ENCODE measurements at regions of chr20 and their contacts with region 1.

Region 1: DNA sequence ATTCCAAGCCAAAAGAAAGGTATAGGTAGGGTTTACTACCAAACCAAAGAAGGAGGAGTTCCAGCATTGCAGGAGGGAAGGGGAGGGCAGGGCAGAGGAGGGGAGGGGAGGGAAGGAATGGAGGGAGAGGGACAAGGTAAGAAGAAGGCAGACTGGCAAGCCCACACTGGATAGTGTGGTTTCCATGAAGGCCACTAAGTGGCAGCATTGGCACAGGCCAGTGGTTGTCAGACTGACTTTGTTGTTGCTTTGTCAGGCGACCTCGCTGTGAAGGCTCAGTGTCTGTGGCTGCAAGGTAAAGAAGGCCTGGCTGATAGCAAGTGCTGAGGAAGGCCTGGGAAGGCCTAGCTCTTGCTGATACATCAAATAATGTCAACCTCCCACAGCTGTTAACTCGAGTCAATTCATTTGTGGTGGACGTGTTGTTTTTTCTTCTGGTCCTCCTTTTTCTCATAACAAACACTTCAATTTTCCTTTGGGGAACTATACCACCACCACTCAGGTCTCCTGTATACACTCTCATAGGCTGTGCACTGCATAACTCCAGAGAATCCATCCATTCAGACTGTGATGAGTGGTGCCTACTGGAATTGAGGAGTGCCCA is 7.7 kb upstream of the ZNF334 start:
- DNase-seq: peak; percentile 47
- H3K4me3 ChIP-seq: no peak overlapping the region
- H3K27ac ChIP-seq: no peak overlapping the region
- H3K4me1 ChIP-seq: no peaks in the 10 kb centered on the region
- H3K27me3 ChIP-seq: no peaks in the 10 kb centered on the region
- CTCF ChIP-seq: peak; percentile 37 to 77
- POLR2A ChIP-seq: no peak

Region 2: DNA sequence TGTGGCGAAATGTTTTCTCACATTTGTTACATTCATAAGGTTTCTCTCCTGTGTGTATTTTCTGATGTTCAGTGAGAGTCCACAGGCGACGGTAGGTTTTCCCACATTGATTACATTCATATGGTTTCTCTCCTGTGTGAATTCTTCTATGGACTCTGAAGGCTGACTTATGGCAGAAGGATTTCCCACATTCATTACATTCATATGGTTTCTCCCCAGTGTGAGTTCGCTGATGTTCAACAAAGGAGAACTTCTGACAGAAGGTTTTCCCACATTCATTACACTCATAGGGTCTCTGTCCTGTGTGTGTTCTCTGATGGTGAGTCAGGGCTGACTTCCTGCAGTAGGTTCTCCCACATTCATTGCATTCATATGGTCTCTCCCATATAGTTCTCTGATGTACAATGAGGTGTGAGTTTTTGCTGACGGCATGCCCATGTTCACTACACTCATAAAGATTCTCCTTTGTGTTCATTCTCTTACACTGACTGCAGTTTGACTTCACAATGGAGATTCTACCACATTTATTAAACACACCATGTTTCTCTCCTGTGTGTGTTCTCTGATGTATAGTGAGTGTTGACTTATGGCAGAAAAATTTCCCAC is 19.6 kb before region 1 on chr20:
- CTCF ChIA-PET with region 1: no interaction called
- POLR2A ChIA-PET with region 1: no interaction called
- dilution Hi-C with region 1: no loop called
- intact Hi-C with region 1: no loop called
- DNase-seq: no peak
- H3K4me3 ChIP-seq: no peak overlapping the region
- H3K27ac ChIP-seq: no peak overlapping the region
- H3K4me1 ChIP-seq: no peaks in the 10 kb centered on the region
- H3K27me3 ChIP-seq: no peaks in the 10 kb centered on the region
- CTCF ChIP-seq: no peak
- POLR2A ChIP-seq: no peak

Region 3: DNA sequence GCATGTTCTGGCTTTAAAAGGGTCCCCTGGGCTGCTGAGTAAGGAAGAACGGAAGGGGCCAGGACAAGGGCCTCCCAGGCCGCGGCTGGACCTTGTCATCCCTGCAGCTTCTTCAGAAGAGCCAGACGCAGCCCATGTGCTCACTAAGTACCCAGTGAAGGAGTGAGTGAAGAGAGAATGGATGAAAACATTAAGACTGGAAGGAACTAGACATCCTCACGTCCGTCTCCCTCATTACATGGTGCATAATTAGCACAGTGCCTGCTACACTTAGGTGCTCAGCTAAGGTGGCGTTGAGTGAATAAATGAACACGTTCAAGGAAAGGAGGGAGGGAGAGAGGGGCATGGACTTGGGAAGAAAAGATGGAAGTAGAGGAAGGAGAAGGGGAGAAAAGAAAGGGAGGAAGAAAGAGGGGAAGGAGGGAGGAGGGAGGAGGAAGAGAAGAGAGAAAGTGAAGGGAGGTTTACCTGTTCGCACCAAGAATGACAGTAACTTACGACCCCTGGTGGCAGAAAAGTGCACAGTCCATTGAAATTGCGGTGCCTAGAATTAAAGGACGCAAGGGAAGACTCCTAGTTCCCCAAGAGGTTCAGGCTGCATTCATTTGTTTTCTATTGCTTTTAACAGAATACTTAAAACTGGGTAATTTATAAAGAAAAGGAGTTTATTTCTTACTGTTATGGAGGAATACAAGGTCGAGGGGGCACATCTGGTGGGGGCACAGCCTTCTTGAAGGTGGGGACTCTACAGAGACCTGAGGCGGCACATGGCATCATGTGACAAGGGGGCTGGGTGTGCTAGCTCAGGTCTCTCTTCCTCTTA is 160.2 kb after region 1 on chr20:
- CTCF ChIA-PET with region 1: interaction called, 49 read pairs
- POLR2A ChIA-PET with region 1: no interaction called
- dilution Hi-C with region 1: no loop called
- intact Hi-C with region 1: loop called (anchors 1 kb)
- DNase-seq: peak; percentile 52
- H3K4me3 ChIP-seq: no peak overlapping the region
- H3K27ac ChIP-seq: no peak overlapping the region
- H3K4me1 ChIP-seq: peaks cover 3% of the 10 kb centered on the region
- H3K27me3 ChIP-seq: no peaks in the 10 kb centered on the region
- CTCF ChIP-seq: peak; percentile 69 to 75
- POLR2A ChIP-seq: no peak

Region 4: GRCh38 chr20:46699651-46700359 is 178.7 kb after region 1 on chr20:
- CTCF ChIA-PET with region 1: no interaction called
- POLR2A ChIA-PET with region 1: no interaction called
- dilution Hi-C with region 1: no loop called
- intact Hi-C with region 1: loop called (anchors 1 kb)
- DNase-seq: peak; percentile 30
- H3K4me3 ChIP-seq: no peak overlapping the region
- H3K27ac ChIP-seq: no peak overlapping the region
- H3K4me1 ChIP-seq: no peaks in the 10 kb centered on the region
- H3K27me3 ChIP-seq: peaks cover 3% of the 10 kb centered on the region in 2 experiments
- CTCF ChIP-seq: peak; percentile 68 to 75
- POLR2A ChIP-seq: no peak